ENCODE measurements at regions of chr15 and their contacts with region 1.

Region 1: GRCh38 chr15:26891448-26892181 is 24.8 kb downstream of the GABRA5 start:
- DNase-seq: peak; percentile 68
- H3K4me3 ChIP-seq: peak overlapping the region; percentile 26
- H3K27ac ChIP-seq: no peak overlapping the region
- H3K4me1 ChIP-seq: no peaks in the 10 kb centered on the region
- H3K27me3 ChIP-seq: no peaks in the 10 kb centered on the region
- CTCF ChIP-seq: peak; percentile 79

Region 2: GRCh38 chr15:26686547-26687187 is 204.9 kb before region 1 on chr15:
- CTCF ChIA-PET with region 1: no interaction called
- POLR2A ChIA-PET with region 1: no interaction called
- intact Hi-C with region 1: no loop called
- DNase-seq: no peak
- H3K4me3 ChIP-seq: no peak overlapping the region
- H3K27ac ChIP-seq: no peak overlapping the region
- H3K4me1 ChIP-seq: no peaks in the 10 kb centered on the region
- H3K27me3 ChIP-seq: no peaks in the 10 kb centered on the region
- CTCF ChIP-seq: no peak

Region 3: DNA sequence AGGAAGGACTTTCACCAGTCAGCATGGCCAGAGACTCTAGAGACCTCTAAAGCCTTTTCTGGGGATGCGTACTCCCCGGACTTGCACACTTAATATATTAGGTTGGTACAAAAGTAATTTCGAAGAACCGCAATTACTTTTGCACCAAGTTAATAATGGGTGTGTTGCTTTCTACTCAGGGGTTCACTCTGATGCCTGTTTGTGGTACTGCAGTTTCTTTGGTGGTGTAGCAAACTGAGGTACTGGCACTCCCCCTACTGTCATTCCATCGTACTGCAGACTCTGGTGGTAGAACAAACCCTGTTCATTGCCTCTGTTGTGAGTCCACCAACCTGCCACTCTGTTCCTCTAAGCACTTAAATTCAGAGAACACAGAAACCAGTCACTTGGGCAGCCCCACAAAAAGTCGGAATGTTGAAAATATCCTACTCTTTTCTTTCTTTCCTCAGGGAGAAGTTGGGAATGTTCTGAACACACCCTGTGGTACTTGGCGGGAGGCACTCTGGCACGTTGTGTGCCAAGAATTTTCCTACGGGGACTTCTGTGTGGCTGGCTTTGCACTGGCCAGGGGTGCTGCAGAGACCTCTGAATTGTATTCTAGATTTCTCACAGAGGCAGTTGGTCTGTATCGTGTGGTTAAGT is 125.7 kb after region 1 on chr15:
- CTCF ChIA-PET with region 1: no interaction called
- POLR2A ChIA-PET with region 1: no interaction called
- intact Hi-C with region 1: loop called (anchors 5 kb)
- DNase-seq: peak; percentile 36
- H3K4me3 ChIP-seq: no peak overlapping the region
- H3K27ac ChIP-seq: no peak overlapping the region
- H3K4me1 ChIP-seq: no peaks in the 10 kb centered on the region
- H3K27me3 ChIP-seq: no peaks in the 10 kb centered on the region
- CTCF ChIP-seq: peak; percentile 53

Measured in A673 (cell line).